ENCODE measurements at regions of chr12 and their contacts with region 1.

Region 1: DNA sequence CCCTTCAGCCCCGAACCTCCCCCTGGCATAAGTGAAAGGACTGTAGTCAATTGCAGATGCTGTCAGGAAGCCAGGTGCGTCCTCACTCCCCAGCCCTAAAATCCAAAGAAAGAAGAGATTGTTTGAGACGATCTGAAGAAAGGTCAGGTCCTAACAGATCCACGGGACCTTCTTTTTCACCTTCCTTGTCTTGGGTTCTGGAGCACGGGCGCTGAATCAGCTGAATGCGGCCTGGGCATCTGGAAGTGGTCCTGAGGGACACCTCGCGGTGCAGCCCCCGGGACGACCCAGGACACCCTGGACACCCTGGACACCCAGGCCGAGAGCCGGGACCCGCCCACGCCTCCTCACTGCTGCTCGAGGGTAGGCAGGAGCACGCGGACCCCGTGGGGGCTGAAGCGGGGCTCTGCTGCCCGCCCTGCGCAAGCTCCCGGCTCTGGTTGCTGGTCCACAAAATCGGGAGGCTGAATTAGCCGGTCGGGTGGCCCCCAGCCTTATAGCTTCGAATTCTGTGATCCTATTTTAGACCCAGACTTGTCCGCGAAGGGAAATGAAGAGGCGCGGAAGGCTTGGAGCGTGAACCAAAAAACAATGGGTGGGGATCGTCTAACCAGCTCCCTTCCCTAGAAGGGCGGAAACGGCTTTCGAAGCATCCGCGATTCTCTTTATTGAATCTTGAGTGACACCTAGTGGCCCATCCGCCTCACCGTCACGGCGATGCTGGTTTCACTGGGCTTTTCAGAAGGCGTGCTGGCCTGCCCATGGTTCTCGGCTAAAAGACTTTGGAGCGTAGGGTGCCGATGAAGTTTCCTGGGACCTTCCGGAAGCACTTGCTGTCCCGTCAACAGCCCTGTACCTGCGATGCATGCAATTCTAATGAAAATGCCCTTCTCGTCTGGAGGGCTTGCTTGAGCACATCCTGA is 46.4 kb upstream of the PLXNC1 start:
- DNase-seq: peak; percentile 91
- ATAC-seq: peak; percentile 77
- H3K4me3 Mint-ChIP-seq: peak overlapping the region; percentile 76
- H3K27ac Mint-ChIP-seq: peak overlapping the region; percentile 62
- H3K4me1 Mint-ChIP-seq: peaks cover 30% of the 10 kb centered on the region
- H3K27me3 Mint-ChIP-seq: peaks cover 5% of the 10 kb centered on the region

Region 2: DNA sequence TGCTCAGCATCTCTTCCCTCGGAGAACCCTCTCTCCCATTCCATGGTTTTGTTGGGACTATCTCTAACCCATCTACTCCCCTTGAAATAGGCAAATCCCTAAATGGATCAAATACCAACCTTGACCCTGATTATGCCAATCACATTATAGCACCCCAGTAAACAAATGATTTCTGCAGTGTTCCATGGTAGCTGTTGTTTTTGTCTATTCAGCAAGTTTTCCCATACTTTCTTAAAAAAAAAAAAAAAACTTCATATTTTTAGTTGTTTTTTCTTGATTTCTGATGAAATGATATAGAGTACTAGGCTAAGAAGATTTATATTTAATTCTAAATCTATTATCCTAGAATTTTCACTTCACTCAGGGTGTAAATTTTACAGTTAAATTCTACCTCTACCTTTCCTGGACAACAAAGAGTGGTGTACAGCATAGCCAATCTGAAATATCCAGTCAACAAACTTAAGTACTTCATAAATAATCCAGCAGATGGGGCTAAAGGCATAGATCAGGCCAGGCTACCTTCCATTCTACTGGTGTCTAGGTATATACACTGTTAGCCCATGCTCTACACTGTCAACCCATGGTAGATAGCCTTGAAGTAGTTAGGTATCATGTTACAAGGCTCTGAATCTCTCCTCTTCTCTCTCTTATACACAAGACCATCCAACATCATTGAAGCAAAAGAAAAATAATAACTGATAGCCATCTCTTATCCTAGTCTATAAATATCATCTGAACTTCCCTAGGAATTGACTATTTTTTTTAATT is 1317.0 kb before region 1 on chr12:
- CTCF ChIA-PET with region 1: no interaction called
- POLR2A ChIA-PET with region 1: no interaction called
- intact Hi-C with region 1: loop called (anchors 1 to 5 kb)
- DNase-seq: peak; percentile 33
- ATAC-seq: peak; percentile 98
- H3K4me3 Mint-ChIP-seq: no peak overlapping the region
- H3K27ac Mint-ChIP-seq: no peak overlapping the region
- H3K4me1 Mint-ChIP-seq: peaks cover 2% of the 10 kb centered on the region
- H3K27me3 Mint-ChIP-seq: no peaks in the 10 kb centered on the region

Region 3: GRCh38 chr12:93467351-93468007 is 634.5 kb before region 1 on chr12 and contains the start of gene MRPL42:
- CTCF ChIA-PET with region 1: interaction called, 10 read pairs
- POLR2A ChIA-PET with region 1: no interaction called
- intact Hi-C with region 1: loop called in 1 of 2 experiments (anchors 1 kb)
- DNase-seq: peak; percentile 95
- ATAC-seq: peak; percentile 91
- H3K4me3 Mint-ChIP-seq: peak within 1 kb of the TSS; percentile 95
- H3K27ac Mint-ChIP-seq: peak within 1 kb of the TSS; percentile 93
- H3K4me1 Mint-ChIP-seq: peaks cover 29% of the 10 kb centered on the region
- H3K27me3 Mint-ChIP-seq: no peaks in the 10 kb centered on the region
- total RNA-seq, gene MRPL42: 78.7 to 98.3 TPM

Region 4: DNA sequence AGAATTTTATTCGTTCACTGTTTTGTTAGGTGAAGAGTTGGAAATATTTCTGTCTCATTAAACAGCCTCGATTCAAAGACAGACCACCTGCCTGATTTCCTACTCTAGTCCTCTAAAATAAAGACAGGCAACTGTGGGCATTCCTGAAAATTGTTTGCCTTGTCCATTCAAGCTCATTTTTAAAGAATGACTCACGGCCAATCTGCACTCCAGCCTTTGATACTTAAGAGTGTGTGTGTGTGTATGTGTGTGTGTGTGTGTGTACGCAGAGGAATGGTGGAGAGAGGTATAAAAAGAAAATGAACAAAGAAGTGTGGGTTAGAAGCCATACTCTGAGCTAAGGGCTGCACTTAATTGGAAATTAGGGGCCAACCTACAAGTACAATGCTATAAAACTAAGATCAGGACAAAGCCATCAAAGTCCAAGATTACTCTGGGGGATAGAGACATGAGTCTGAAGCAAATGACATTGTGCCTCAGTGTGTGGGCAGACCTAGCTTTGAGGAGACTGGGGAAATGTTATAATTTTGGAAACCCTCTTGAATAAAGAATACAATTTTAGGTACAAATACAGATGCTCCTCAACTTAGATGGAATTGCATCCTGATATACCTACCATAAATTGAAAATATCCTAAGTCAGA is 575.1 kb before region 1 on chr12:
- CTCF ChIA-PET with region 1: interaction called, 17 read pairs
- POLR2A ChIA-PET with region 1: no interaction called
- intact Hi-C with region 1: loop called in 1 of 2 experiments (anchors 1 kb)
- DNase-seq: no peak
- ATAC-seq: no peak
- H3K4me3 Mint-ChIP-seq: no peak overlapping the region
- H3K27ac Mint-ChIP-seq: no peak overlapping the region
- H3K4me1 Mint-ChIP-seq: no peaks in the 10 kb centered on the region
- H3K27me3 Mint-ChIP-seq: peaks cover 8% of the 10 kb centered on the region

Region 5: DNA sequence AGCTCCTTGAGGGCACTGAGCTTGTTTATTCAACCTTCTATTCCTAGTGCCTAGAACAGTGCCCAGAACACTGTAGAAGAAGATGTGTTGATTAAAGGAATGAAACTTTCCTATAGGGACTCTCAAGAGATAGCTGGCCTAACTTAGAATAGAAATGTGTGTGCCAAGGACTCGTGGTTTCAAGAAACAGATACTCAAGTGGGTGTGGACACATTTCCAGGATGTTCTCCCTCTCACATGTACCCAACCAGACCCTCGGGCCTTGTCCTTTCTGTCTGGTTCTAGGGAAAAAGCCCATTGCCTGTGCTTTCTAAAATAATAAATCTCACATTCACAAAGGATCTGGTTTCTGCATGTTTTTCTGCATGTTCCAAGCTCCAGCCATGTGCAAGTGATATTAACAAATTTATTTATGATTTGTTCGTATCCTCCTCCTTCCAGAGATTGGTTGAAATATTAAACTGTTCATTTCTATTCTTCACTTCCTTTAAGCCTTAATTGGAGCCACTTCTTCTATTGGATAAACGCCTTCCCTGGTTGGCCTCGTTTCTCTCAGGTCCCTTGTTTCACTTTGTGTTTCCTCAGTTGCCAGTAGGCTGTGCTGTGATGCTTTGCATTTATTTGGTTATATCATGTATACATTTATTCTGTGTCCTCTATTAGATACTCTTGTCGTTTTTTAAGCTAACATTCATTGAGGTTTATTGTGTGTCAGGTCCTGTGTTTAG is 335.0 kb before region 1 on chr12:
- CTCF ChIA-PET with region 1: interaction called, 42 read pairs
- POLR2A ChIA-PET with region 1: interaction called, 3 read pairs
- intact Hi-C with region 1: loop called (anchors 1 kb)
- DNase-seq: peak; percentile 54
- ATAC-seq: peak; percentile 75
- H3K4me3 Mint-ChIP-seq: no peak overlapping the region
- H3K27ac Mint-ChIP-seq: no peak overlapping the region
- H3K4me1 Mint-ChIP-seq: peaks cover 22% of the 10 kb centered on the region
- H3K27me3 Mint-ChIP-seq: no peaks in the 10 kb centered on the region

Region 6: DNA sequence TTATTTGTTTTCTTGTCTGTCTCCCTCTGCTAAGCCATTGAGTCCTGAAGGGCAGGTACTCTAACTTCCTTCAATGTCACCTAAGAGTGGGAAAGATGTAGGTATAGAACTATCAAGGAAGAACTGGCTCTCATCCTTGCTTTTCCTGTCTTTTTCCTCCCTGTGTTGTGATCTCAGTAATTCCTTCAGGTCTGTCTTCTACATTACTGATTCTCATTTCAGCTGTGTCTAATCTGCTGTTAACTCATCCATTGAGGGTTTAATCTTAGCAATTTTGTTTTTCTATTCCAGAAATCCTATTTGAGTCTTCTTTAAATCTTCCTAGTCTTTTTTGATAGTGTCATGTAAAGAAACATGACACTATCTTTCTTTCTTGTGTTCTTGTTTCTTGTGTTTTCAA is 78.1 kb before region 1 on chr12:
- CTCF ChIA-PET with region 1: interaction called, 19 read pairs
- POLR2A ChIA-PET with region 1: no interaction called
- intact Hi-C with region 1: no loop called
- DNase-seq: no peak
- ATAC-seq: no peak
- H3K4me3 Mint-ChIP-seq: no peak overlapping the region
- H3K27ac Mint-ChIP-seq: no peak overlapping the region
- H3K4me1 Mint-ChIP-seq: no peaks in the 10 kb centered on the region
- H3K27me3 Mint-ChIP-seq: no peaks in the 10 kb centered on the region

Region 7: GRCh38 chr12:94112132-94112531 is 10.1 kb after region 1 on chr12:
- CTCF ChIA-PET with region 1: interaction called, 15 read pairs
- POLR2A ChIA-PET with region 1: no interaction called
- intact Hi-C with region 1: no loop called
- DNase-seq: no peak
- ATAC-seq: no peak
- H3K4me3 Mint-ChIP-seq: no peak overlapping the region
- H3K27ac Mint-ChIP-seq: no peak overlapping the region
- H3K4me1 Mint-ChIP-seq: peaks cover 13% of the 10 kb centered on the region
- H3K27me3 Mint-ChIP-seq: peaks cover 4% of the 10 kb centered on the region

Region 8: GRCh38 chr12:94266796-94267536 is 165.0 kb after region 1 on chr12:
- CTCF ChIA-PET with region 1: no interaction called
- POLR2A ChIA-PET with region 1: no interaction called
- intact Hi-C with region 1: no loop called
- DNase-seq: no peak
- ATAC-seq: no peak
- H3K4me3 Mint-ChIP-seq: no peak overlapping the region
- H3K27ac Mint-ChIP-seq: peak overlapping the region; percentile 16
- H3K4me1 Mint-ChIP-seq: peaks cover 84% of the 10 kb centered on the region
- H3K27me3 Mint-ChIP-seq: no peaks in the 10 kb centered on the region

Measured in activated CD4-positive, alpha-beta T cell treated with anti-CD3 and anti-CD28 coated beads for 36 hours (primary cell).